ENCODE measurements at regions of chr2 and their contacts with region 1.

Region 1: GRCh38 chr2:37324786-37325624 is at the start of gene PRKD3:
- DNase-seq: peak; percentile 46 to 72 (median 65)
- ATAC-seq: peak; percentile 88
- H3K4me3 ChIP-seq: peak within 1 kb of the TSS; percentile 75
- H3K4me3 Mint-ChIP-seq: peak within 1 kb of the TSS; percentile 95 to 99 (median 98)
- H3K27ac ChIP-seq: peak within 1 kb of the TSS; percentile 73
- H3K27ac Mint-ChIP-seq: peak within 1 kb of the TSS; percentile 92 to 98 (median 95)
- H3K4me1 ChIP-seq: peaks cover 30 to 31% of the 10 kb centered on the region in 2 donors
- H3K4me1 Mint-ChIP-seq: peaks cover 18 to 48% (median 36%) of the 10 kb centered on the region in 7 donors
- H3K27me3 ChIP-seq: no peaks in the 10 kb centered on the region
- H3K27me3 Mint-ChIP-seq: peaks cover 0 to 56% (median 21%) of the 10 kb centered on the region in 5 donors
- total RNA-seq, gene PRKD3: 12.8 to 47.3 (median 46.4) TPM

Region 2: GRCh38 chr2:37026050-37026449 is 299.0 kb before region 1 on chr2:
- CTCF ChIA-PET with region 1: no interaction called
- POLR2A ChIA-PET with region 1: no interaction called
- intact Hi-C with region 1: no loop called
- DNase-seq: no peak
- ATAC-seq: no peak
- H3K4me3 ChIP-seq: no peak overlapping the region
- H3K4me3 Mint-ChIP-seq: no peak overlapping the region
- H3K27ac ChIP-seq: no peak overlapping the region
- H3K27ac Mint-ChIP-seq: peak overlapping the region in 1 of 9 donors; percentile 74
- H3K4me1 ChIP-seq: no peaks in the 10 kb centered on the region
- H3K4me1 Mint-ChIP-seq: peaks cover 0 to 2% (median 0%) of the 10 kb centered on the region in 7 donors
- H3K27me3 ChIP-seq: no peaks in the 10 kb centered on the region
- H3K27me3 Mint-ChIP-seq: no peaks in the 10 kb centered on the region

Region 3: GRCh38 chr2:37083873-37084794 is 240.9 kb before region 1 on chr2 and contains the starts of genes GPATCH11 and HEATR5B:
- CTCF ChIA-PET with region 1: no interaction called
- POLR2A ChIA-PET with region 1: no interaction called
- intact Hi-C with region 1: loop called (anchors 5 to 10 kb)
- DNase-seq: peak; percentile 76 to 94 (median 92)
- ATAC-seq: peak; percentile 87
- H3K4me3 ChIP-seq: peak within 1 kb of the TSS; percentile 74
- H3K4me3 Mint-ChIP-seq: peak within 1 kb of the TSS in 1 of 10 donors; percentile 64
- H3K27ac ChIP-seq: peak within 1 kb of the TSS; percentile 85
- H3K27ac Mint-ChIP-seq: no peak within 1 kb of the TSS
- H3K4me1 ChIP-seq: peaks cover 35 to 45% of the 10 kb centered on the region in 2 donors
- H3K4me1 Mint-ChIP-seq: peaks cover 8 to 62% (median 50%) of the 10 kb centered on the region in 7 donors
- H3K27me3 ChIP-seq: no peaks in the 10 kb centered on the region
- H3K27me3 Mint-ChIP-seq: no peaks in the 10 kb centered on the region
- total RNA-seq, gene GPATCH11: 6.0 to 19.0 (median 11.1) TPM
- total RNA-seq, gene HEATR5B: 25.2 to 50.5 (median 39.3) TPM

Region 4: DNA sequence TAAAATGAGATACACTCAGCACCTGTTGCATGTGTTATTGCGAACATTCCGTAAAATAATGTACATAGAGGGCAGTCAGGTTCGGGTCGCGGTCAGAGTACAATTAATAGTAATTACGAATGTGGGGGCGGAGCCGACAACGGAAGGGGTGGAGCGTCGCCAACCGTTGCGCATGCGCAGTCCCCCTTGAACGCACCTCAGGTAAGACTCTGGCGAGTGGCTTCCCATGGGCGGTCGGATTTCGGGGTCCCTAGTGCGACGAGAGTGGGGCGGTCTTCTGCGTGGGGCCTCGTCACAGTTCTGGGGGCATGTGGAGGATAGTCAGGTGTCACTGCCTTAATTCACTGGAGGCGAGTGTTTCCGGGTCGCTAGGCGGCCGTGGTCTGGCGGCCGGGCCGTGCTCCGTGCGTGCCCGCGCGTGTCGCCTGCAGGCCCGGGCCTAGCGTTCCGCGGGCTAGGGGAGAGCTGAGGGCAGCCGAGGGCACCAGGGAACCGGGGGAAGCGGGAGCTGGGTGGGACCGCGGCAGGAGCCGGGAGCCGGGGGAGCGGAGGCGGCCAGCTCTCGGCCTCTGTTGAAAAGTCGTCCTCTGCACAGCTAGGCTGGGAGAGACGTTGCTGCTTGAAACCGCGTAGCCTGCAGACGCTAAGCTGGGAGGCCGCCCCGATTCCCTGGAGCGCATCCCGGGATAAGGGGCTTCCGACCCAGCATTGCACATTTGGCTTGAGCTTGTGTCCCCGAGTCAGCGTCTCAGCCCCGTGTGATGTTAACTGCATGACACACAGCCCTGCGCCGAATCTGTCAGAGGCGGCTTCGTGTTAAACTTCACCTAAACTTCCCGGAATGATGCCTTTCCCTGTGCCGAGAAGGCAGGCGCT is 128.4 kb before region 1 on chr2 and contains the start of gene CEBPZOS:
- CTCF ChIA-PET with region 1: no interaction called
- POLR2A ChIA-PET with region 1: interaction called, 3 read pairs
- intact Hi-C with region 1: loop called in 1 of 2 experiments (anchors 1 kb)
- DNase-seq: peak; percentile 82 to 91 (median 88)
- ATAC-seq: peak; percentile 92
- H3K4me3 ChIP-seq: peak within 1 kb of the TSS; percentile 90
- H3K4me3 Mint-ChIP-seq: peak within 1 kb of the TSS; percentile 93 to 100 (median 99)
- H3K27ac ChIP-seq: peak within 1 kb of the TSS; percentile 82
- H3K27ac Mint-ChIP-seq: peak within 1 kb of the TSS; percentile 93 to 99 (median 99)
- H3K4me1 ChIP-seq: peaks cover 10 to 15% of the 10 kb centered on the region in 2 donors
- H3K4me1 Mint-ChIP-seq: peaks cover 14 to 47% (median 34%) of the 10 kb centered on the region in 7 donors
- H3K27me3 ChIP-seq: no peaks in the 10 kb centered on the region
- H3K27me3 Mint-ChIP-seq: peaks cover 0 to 5% (median 0%) of the 10 kb centered on the region in 5 donors
- total RNA-seq, gene CEBPZOS: 26.9 to 40.7 (median 40.4) TPM

Region 5: DNA sequence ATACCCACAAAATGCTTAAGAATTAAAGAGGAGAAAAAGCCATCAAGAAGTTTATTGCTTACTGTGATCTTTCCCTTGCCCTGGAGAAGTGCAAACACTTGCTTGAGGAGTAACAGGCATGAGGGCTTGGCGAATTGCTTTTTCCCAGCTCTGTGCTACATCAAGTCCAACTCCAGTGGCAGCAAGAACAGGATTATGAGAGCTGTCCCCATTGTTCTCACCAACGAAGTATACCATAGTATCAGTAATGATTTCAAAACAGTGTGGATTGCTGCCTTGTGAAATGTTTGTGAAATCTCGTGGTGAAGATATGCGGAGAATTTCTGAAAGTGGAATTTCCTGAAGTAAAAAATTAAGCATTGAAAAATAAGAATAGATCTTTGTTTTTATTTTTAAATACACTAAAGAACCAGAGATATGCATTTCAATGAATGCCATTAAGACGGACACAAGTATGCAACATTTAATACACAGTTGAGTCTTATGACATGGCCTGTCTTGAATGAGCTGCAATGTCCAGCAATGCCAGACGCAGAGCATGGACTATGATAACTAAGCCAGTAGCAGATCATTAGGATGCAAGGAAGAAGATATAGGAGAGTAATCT is 50.5 kb before region 1 on chr2:
- CTCF ChIA-PET with region 1: no interaction called
- POLR2A ChIA-PET with region 1: no interaction called
- intact Hi-C with region 1: no loop called
- DNase-seq: no peak
- ATAC-seq: no peak
- H3K4me3 ChIP-seq: no peak overlapping the region
- H3K4me3 Mint-ChIP-seq: no peak overlapping the region
- H3K27ac ChIP-seq: no peak overlapping the region
- H3K27ac Mint-ChIP-seq: peak overlapping the region in 1 of 9 donors; percentile 4
- H3K4me1 ChIP-seq: no peaks in the 10 kb centered on the region
- H3K4me1 Mint-ChIP-seq: no peaks in the 10 kb centered on the region
- H3K27me3 ChIP-seq: no peaks in the 10 kb centered on the region
- H3K27me3 Mint-ChIP-seq: no peaks in the 10 kb centered on the region

Region 6: GRCh38 chr2:37287966-37288365 is 37.0 kb before region 1 on chr2:
- CTCF ChIA-PET with region 1: interaction called, 3 read pairs
- POLR2A ChIA-PET with region 1: no interaction called
- intact Hi-C with region 1: loop called in 1 of 2 experiments (anchors 2 kb)
- DNase-seq: peak in 1 of 9 donors; percentile 13
- ATAC-seq: peak; percentile 37
- H3K4me3 ChIP-seq: no peak overlapping the region
- H3K4me3 Mint-ChIP-seq: no peak overlapping the region
- H3K27ac ChIP-seq: no peak overlapping the region
- H3K27ac Mint-ChIP-seq: peak overlapping the region in 1 of 9 donors; percentile 28
- H3K4me1 ChIP-seq: no peaks in the 10 kb centered on the region
- H3K4me1 Mint-ChIP-seq: peaks cover 0 to 7% (median 0%) of the 10 kb centered on the region in 7 donors
- H3K27me3 ChIP-seq: no peaks in the 10 kb centered on the region
- H3K27me3 Mint-ChIP-seq: no peaks in the 10 kb centered on the region

Region 7: GRCh38 chr2:37344453-37345361 is 19.7 kb after region 1 on chr2 and contains the start of gene QPCT:
- CTCF ChIA-PET with region 1: interaction called, 3 read pairs
- POLR2A ChIA-PET with region 1: no interaction called
- intact Hi-C with region 1: loop called in 1 of 2 experiments (anchors 1 kb)
- DNase-seq: peak; percentile 25 to 49 (median 44)
- ATAC-seq: peak; percentile 86
- H3K4me3 ChIP-seq: peak within 1 kb of the TSS; percentile 57
- H3K4me3 Mint-ChIP-seq: peak within 1 kb of the TSS; percentile 78 to 89 (median 86)
- H3K27ac ChIP-seq: no peak within 1 kb of the TSS
- H3K27ac Mint-ChIP-seq: peak within 1 kb of the TSS in 6 of 9 donors; percentile 9 to 68 (median 50)
- H3K4me1 ChIP-seq: peaks cover 4 to 6% of the 10 kb centered on the region in 2 donors
- H3K4me1 Mint-ChIP-seq: peaks cover 4 to 17% (median 10%) of the 10 kb centered on the region in 7 donors
- H3K27me3 ChIP-seq: no peaks in the 10 kb centered on the region
- H3K27me3 Mint-ChIP-seq: peaks cover 1 to 83% (median 17%) of the 10 kb centered on the region in 5 donors
- total RNA-seq, gene QPCT: 0.36 to 15.1 (median 0.86) TPM

Region 8: DNA sequence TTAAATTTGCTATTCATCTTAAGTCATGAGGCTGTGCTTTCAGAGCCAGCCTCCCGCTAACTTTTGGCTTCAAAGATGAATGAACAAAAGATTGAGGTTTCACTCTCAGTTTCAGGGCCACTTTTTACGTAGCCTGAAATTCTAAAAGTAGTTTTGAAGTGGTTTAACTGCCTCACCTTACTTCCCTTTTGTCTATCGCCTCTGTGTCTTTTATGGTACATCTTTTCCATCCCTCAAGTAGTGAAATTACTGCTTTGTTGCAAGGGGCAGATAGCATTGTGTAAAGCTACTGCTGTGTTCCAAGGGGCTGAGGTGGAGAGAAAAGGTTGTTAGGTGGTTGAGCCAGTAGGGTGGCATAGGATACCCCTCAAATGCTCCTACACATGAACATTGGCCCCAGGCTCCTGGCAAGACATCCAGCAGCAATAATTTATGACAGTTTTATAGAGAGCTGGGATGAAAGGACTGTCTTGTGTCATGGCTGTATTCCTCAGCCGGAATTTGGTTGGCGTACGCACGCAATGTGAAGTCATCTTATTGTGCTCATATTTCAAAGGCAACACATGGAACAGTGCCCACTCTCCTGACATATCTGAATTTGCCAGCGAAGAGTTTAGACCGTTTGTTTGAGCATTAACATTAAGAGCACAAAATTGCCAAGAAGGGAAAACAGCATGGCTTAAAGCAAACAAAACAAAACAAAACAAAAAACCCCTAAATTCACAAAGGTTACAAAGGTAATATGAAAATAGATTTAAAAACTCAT is 51.6 kb after region 1 on chr2:
- CTCF ChIA-PET with region 1: no interaction called
- POLR2A ChIA-PET with region 1: no interaction called
- intact Hi-C with region 1: loop called in 1 of 2 experiments (anchors 1 kb)
- DNase-seq: peak in 8 of 9 donors; percentile 27 to 69 (median 56)
- ATAC-seq: peak; percentile 86
- H3K4me3 ChIP-seq: no peak overlapping the region
- H3K4me3 Mint-ChIP-seq: peak overlapping the region in 9 of 10 donors; percentile 33 to 80 (median 63)
- H3K27ac ChIP-seq: no peak overlapping the region
- H3K27ac Mint-ChIP-seq: peak overlapping the region in 4 of 9 donors; percentile 16 to 65 (median 35)
- H3K4me1 ChIP-seq: peaks cover 13 to 17% of the 10 kb centered on the region in 2 donors
- H3K4me1 Mint-ChIP-seq: peaks cover 11 to 30% (median 17%) of the 10 kb centered on the region in 7 donors
- H3K27me3 ChIP-seq: peaks cover 0 to 6% of the 10 kb centered on the region in 2 donors
- H3K27me3 Mint-ChIP-seq: peaks cover 25 to 66% (median 53%) of the 10 kb centered on the region in 5 donors

Region 9: GRCh38 chr2:38740851-38741731 is 1416.1 kb after region 1 on chr2:
- CTCF ChIA-PET with region 1: no interaction called
- POLR2A ChIA-PET with region 1: no interaction called
- intact Hi-C with region 1: loop called in 1 of 2 experiments (anchors 10 kb)
- DNase-seq: peak in 7 of 9 donors; percentile 31 to 59 (median 53)
- ATAC-seq: peak; percentile 56
- H3K4me3 ChIP-seq: no peak overlapping the region
- H3K4me3 Mint-ChIP-seq: no peak overlapping the region
- H3K27ac ChIP-seq: no peak overlapping the region
- H3K27ac Mint-ChIP-seq: peak overlapping the region in 8 of 9 donors; percentile 3 to 83 (median 70)
- H3K4me1 ChIP-seq: peaks cover 10 to 11% of the 10 kb centered on the region in 2 donors
- H3K4me1 Mint-ChIP-seq: peaks cover 20 to 57% (median 36%) of the 10 kb centered on the region in 7 donors
- H3K27me3 ChIP-seq: no peaks in the 10 kb centered on the region
- H3K27me3 Mint-ChIP-seq: no peaks in the 10 kb centered on the region

Measured in naive thymus-derived CD4-positive, alpha-beta T cell (primary cell).